ENCODE measurements at regions of chr10 and their contacts with region 1.

Region 1: GRCh38 chr10:77641788-77642397 is 4.3 kb upstream of the KCNMA1 start:
- DNase-seq: no peak
- H3K4me3 ChIP-seq: no peak overlapping the region
- H3K27ac ChIP-seq: peak overlapping the region in 3 of 4 donors; percentile 25 to 92 (median 39)
- H3K4me1 ChIP-seq: peaks cover 7 to 49% (median 40%) of the 10 kb centered on the region in 4 donors
- H3K27me3 ChIP-seq: peaks cover 0 to 23% (median 0%) of the 10 kb centered on the region in 4 donors
- CTCF ChIP-seq: peak; percentile 83 to 93 (median 90)
- EP300 ChIP-seq: no peak
- POLR2A ChIP-seq: no peak

Region 2: GRCh38 chr10:77173615-77174461 is 468.1 kb before region 1 on chr10:
- intact Hi-C with region 1: loop called (anchors 2 kb)
- DNase-seq: no peak
- H3K4me3 ChIP-seq: no peak overlapping the region
- H3K27ac ChIP-seq: peak overlapping the region; percentile 41 to 69 (median 65)
- H3K4me1 ChIP-seq: peaks cover 0 to 50% (median 41%) of the 10 kb centered on the region in 4 donors
- H3K27me3 ChIP-seq: no peaks in the 10 kb centered on the region
- CTCF ChIP-seq: peak; percentile 86 to 94 (median 94)
- EP300 ChIP-seq: no peak
- POLR2A ChIP-seq: no peak

Region 3: GRCh38 chr10:77391605-77392235 is 250.2 kb before region 1 on chr10:
- intact Hi-C with region 1: loop called (anchors 2 kb)
- DNase-seq: no peak
- H3K4me3 ChIP-seq: no peak overlapping the region
- H3K27ac ChIP-seq: peak overlapping the region; percentile 73 to 82 (median 79)
- H3K4me1 ChIP-seq: peaks cover 13 to 85% (median 77%) of the 10 kb centered on the region in 4 donors
- H3K27me3 ChIP-seq: no peaks in the 10 kb centered on the region
- CTCF ChIP-seq: peak; percentile 61 to 73 (median 64)
- EP300 ChIP-seq: no peak
- POLR2A ChIP-seq: no peak

Region 4: DNA sequence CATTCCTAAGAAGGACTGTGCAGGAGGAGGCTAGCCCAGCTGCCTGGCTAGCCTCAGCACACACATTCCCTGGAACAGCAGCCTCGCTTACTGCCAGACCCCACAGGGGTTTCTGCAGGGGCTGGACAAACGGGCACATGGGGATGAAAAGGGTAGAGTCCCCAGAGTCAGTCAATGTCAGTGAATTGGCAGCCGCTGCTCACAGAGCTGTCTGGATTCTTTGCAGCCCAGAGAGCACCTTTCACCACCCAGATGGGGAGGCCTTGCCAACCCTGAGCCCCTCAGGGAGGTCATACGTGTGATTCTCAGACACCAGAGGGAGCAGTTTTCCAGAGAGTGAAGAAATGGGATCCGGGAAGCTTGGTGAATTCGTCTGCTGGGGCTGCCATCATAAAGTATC is 147.6 kb before region 1 on chr10:
- intact Hi-C with region 1: loop called (anchors 5 kb)
- DNase-seq: no peak
- H3K4me3 ChIP-seq: no peak overlapping the region
- H3K27ac ChIP-seq: peak overlapping the region in 1 of 4 donors; percentile 58
- H3K4me1 ChIP-seq: peaks cover 0 to 80% (median 50%) of the 10 kb centered on the region in 4 donors
- H3K27me3 ChIP-seq: no peaks in the 10 kb centered on the region
- CTCF ChIP-seq: peak in 2 of 3 experiments; percentile 39 to 42
- EP300 ChIP-seq: no peak
- POLR2A ChIP-seq: no peak